ENCODE measurements at regions of chr9 and their contacts with region 1.

Region 1: DNA sequence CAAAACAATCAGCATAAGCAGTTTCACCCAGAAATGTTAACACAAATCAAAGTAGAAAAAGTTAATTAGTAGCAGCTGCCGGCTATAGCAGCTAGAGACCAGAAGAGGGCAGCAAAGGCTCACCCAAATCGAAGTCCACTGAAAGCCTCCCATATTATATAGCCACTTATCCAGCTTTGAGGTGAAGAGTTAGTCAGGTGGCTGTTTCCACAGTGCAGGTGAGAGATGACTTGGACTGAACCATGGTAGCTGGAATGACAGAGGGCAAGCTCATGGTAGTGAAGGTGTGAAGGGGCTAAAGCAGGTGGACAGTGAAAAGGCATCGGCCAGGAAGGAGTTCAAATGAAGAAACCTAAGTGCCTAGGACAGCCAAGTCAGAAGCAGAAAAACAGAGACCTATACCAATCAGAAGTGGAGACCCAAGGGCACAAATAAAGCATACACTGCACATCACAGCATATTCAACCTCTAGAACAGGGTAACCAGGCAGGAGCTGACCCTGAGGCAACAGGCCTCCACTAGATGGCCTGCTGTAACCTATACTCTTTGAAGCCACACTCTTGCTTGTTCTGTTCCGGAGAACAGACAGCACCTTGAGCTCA is 7.2 kb upstream of the RNF38 start:
- DNase-seq: peak; percentile 69
- ATAC-seq: peak; percentile 81
- H3K4me3 ChIP-seq: no peak overlapping the region
- H3K27ac ChIP-seq: no peak overlapping the region
- H3K4me1 ChIP-seq: no peaks in the 10 kb centered on the region
- H3K27me3 ChIP-seq: no peaks in the 10 kb centered on the region
- CTCF ChIP-seq: peak; percentile 84

Region 2: GRCh38 chr9:36423206-36423605 is 16.0 kb after region 1 on chr9:
- CTCF ChIA-PET with region 1: no interaction called
- POLR2A ChIA-PET with region 1: no interaction called
- intact Hi-C with region 1: no loop called
- DNase-seq: no peak
- ATAC-seq: no peak
- H3K4me3 ChIP-seq: no peak overlapping the region
- H3K27ac ChIP-seq: no peak overlapping the region
- H3K4me1 ChIP-seq: peaks cover 17% of the 10 kb centered on the region
- H3K27me3 ChIP-seq: no peaks in the 10 kb centered on the region
- CTCF ChIP-seq: no peak

Region 3: DNA sequence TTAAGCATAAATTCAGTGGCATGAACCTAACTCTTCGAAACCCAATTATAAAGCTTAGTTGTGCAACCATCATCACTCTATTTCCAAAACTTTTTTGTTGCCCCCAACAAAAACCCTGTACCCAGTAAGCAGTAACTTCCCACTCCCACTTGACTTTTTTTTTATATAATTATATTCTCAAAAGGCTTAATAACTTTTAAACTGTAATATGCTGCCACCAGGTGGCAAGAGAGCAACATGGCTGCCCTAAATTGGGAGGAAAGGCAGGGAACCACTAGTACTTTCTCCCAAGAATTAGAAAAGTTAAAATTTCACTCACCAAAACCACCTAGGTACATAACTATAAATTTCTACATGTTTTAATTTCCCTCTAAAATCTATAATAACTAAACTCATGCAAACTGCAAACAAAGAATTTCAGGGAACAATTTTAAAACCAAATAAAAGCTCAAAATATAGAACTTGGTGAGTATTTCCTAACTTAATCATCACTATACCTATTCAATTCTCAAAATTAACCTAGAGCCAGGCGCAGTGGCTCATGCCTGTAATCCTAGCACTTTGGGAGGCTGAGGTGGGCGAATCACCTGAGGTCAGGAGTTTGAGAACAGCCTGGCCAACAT is 43.0 kb after region 1 on chr9:
- CTCF ChIA-PET with region 1: interaction called, 16 read pairs
- POLR2A ChIA-PET with region 1: no interaction called
- intact Hi-C with region 1: loop called (anchors 1 kb)
- DNase-seq: peak; percentile 72
- ATAC-seq: no peak; the same call in 1 of the 2 replicates
- H3K4me3 ChIP-seq: no peak overlapping the region
- H3K27ac ChIP-seq: no peak overlapping the region
- H3K4me1 ChIP-seq: no peaks in the 10 kb centered on the region
- H3K27me3 ChIP-seq: no peaks in the 10 kb centered on the region
- CTCF ChIP-seq: peak; percentile 74

Region 4: GRCh38 chr9:36551129-36551528 is 143.9 kb after region 1 on chr9:
- CTCF ChIA-PET with region 1: interaction called, 6 read pairs
- POLR2A ChIA-PET with region 1: no interaction called
- intact Hi-C with region 1: loop called (anchors 1 kb)
- DNase-seq: no peak
- ATAC-seq: no peak
- H3K4me3 ChIP-seq: no peak overlapping the region
- H3K27ac ChIP-seq: no peak overlapping the region
- H3K4me1 ChIP-seq: no peaks in the 10 kb centered on the region
- H3K27me3 ChIP-seq: no peaks in the 10 kb centered on the region
- CTCF ChIP-seq: no peak